Caco-2 (cell line): ENCODE measurements at regions of chr9 and their contacts with region 1.

Region 1: GRCh38 chr9:119601632-119602031 is 232.4 kb upstream of the BRINP1 start:
- DNase-seq: no peak
- H3K4me3 ChIP-seq: no peak overlapping the region
- H3K4me3 Mint-ChIP-seq: no peak overlapping the region
- H3K27ac Mint-ChIP-seq: no peak overlapping the region
- H3K4me1 ChIP-seq: no peaks in the 10 kb centered on the region
- H3K4me1 Mint-ChIP-seq: no peaks in the 10 kb centered on the region
- H3K27me3 ChIP-seq: no peaks in the 10 kb centered on the region
- H3K27me3 Mint-ChIP-seq: peaks cover 7% of the 10 kb centered on the region
- CTCF ChIP-seq: no peak

Region 2: GRCh38 chr9:119639287-119639962 is 37.8 kb after region 1 on chr9:
- CTCF ChIA-PET with region 1: no interaction called
- POLR2A ChIA-PET with region 1: no interaction called
- intact Hi-C with region 1: loop called (anchors 1 kb)
- DNase-seq: no peak
- H3K4me3 ChIP-seq: no peak overlapping the region
- H3K4me3 Mint-ChIP-seq: no peak overlapping the region
- H3K27ac Mint-ChIP-seq: no peak overlapping the region
- H3K4me1 ChIP-seq: no peaks in the 10 kb centered on the region
- H3K4me1 Mint-ChIP-seq: no peaks in the 10 kb centered on the region
- H3K27me3 ChIP-seq: no peaks in the 10 kb centered on the region
- H3K27me3 Mint-ChIP-seq: no peaks in the 10 kb centered on the region
- CTCF ChIP-seq: no peak

Region 3: DNA sequence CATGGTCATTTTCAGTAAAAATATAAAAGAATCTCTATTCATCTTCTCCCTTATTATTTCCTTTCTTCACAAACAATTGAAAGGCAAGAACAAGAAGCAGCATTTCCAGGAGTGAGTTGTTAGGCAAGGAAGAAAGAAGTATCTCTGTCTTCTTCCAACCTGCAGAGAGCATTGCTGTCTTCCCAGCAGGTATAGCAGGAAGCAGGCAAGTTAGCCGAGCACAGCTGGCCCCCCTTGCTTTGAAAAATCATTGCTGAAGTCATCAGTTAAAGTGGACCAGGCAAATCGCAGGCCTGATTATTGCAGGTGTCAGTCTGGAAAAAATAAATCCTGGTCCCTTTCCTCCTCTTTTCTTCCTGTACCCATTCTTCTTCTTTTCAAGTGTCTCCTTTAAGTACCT is 120.8 kb after region 1 on chr9:
- CTCF ChIA-PET with region 1: no interaction called
- POLR2A ChIA-PET with region 1: no interaction called
- intact Hi-C with region 1: no loop called
- DNase-seq: no peak
- H3K4me3 ChIP-seq: no peak overlapping the region
- H3K4me3 Mint-ChIP-seq: no peak overlapping the region
- H3K27ac Mint-ChIP-seq: no peak overlapping the region
- H3K4me1 ChIP-seq: no peaks in the 10 kb centered on the region
- H3K4me1 Mint-ChIP-seq: no peaks in the 10 kb centered on the region
- H3K27me3 ChIP-seq: no peaks in the 10 kb centered on the region
- H3K27me3 Mint-ChIP-seq: peaks cover 17% of the 10 kb centered on the region
- CTCF ChIP-seq: no peak